ENCODE measurements at regions of chr1 and their contacts with region 1.

Region 1: GRCh38 chr1:186325239-186325638 is 49.8 kb downstream of the TPR start:
- DNase-seq: no peak
- H3K4me3 Mint-ChIP-seq: no peak overlapping the region
- H3K27ac Mint-ChIP-seq: no peak overlapping the region
- H3K4me1 Mint-ChIP-seq: peaks cover 39% of the 10 kb centered on the region
- H3K27me3 Mint-ChIP-seq: no peaks in the 10 kb centered on the region

Region 2: DNA sequence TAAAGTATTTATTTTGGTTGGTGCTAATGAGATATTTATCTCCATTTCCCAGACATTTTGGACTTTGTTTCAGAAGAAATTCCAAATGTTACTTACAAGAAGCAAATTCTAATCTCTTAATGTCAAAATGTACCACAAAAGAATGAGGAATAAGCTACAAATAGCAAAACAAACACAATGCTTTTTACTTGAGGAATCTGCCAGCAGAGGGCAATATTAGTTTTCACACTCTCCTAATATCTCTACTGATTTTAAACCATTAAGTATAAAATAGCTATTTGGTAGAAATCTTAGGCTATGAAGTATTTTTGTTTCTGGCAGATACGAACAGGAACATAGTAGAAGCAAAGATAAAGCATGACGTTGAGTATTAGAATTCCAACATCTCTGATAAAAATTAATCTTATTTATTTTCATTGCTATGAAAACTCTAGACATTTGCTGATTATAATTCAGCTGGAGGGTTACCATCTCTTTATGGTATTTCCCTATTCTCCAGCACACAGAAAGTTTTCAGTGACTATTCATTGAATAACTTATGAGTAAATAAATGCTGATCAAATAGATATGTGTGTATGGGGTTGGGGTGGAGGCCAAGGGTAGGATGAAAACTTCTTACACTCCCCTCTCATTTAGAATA is 604.5 kb before region 1 on chr1:
- CTCF ChIA-PET with region 1: no interaction called
- intact Hi-C with region 1: loop called (anchors 10 kb)
- DNase-seq: no peak
- H3K4me3 Mint-ChIP-seq: no peak overlapping the region
- H3K27ac Mint-ChIP-seq: no peak overlapping the region
- H3K4me1 Mint-ChIP-seq: no peaks in the 10 kb centered on the region
- H3K27me3 Mint-ChIP-seq: peaks cover 8% of the 10 kb centered on the region

Region 3: DNA sequence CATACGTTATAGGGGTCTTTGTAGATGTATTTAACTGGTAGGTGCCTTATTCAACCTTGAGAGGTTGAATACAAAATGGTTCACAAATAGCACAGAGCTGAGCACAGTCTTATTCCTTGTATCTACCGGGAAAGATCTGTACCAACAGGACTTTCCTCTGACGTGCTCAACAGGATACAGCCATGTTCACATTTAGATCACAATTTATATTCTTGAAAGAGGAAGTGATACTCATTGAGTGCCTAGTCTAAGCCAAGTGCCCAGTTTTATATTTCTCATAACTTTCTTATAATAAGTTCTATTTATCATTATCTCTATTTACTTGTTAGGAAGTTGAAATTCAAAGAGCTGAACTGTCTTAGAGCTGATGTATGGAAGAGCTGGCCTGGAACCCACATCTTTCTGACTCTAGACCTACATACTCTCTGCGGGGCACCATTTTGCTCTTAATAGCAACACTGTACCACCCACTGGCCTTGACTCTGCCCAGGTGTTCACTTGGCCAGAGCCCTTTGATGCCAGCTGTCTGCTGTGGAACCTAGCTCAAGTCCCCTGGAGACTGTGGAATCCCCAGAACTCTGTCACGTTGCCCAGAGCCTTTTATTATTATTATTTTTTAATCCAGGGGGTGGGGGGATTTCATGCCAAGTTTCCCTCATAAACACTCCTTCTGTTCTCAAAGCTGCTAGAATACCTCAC is 106.4 kb before region 1 on chr1:
- CTCF ChIA-PET with region 1: no interaction called
- intact Hi-C with region 1: no loop called
- DNase-seq: no peak
- H3K4me3 Mint-ChIP-seq: no peak overlapping the region
- H3K27ac Mint-ChIP-seq: no peak overlapping the region
- H3K4me1 Mint-ChIP-seq: no peaks in the 10 kb centered on the region
- H3K27me3 Mint-ChIP-seq: peaks cover 11% of the 10 kb centered on the region

Region 4: DNA sequence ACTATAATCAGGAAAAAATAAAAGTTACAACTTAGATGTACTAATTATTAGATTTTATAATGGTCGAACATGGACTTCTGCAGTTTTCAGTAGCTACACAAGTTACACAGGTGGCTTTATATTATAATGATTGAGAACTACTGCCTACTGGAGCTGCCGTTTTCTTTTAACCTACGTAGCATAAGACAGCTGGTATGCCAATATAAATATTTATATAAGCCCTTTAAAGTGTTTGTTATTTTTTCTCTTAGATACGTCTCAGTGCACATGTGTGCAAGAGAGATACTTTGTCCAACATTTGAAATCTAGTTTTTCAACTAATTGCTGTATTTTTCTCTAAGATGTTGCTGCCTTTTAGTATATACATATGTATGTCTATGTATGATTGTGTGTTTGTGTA is 93.3 kb after region 1 on chr1:
- CTCF ChIA-PET with region 1: no interaction called
- intact Hi-C with region 1: no loop called
- DNase-seq: no peak
- H3K4me3 Mint-ChIP-seq: no peak overlapping the region
- H3K27ac Mint-ChIP-seq: no peak overlapping the region
- H3K4me1 Mint-ChIP-seq: no peaks in the 10 kb centered on the region
- H3K27me3 Mint-ChIP-seq: no peaks in the 10 kb centered on the region

Region 5: DNA sequence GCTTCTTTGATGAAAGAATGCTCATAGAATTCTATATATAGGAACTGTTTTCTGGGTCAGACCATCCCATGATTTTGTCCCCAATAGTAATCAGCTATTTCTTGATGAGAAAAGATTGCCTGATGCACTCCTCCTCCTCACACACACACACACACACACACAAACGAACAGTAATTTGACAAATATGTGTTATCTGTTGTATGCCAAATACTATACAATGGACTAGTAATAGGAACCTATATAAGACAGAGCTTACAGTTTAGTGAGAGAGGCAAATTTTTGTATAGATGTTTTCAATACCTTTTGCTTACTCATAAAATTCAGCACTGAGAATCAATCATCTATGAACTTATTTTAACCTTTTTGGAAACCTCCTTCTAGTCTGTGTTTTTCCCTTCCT is 580.3 kb after region 1 on chr1:
- CTCF ChIA-PET with region 1: no interaction called
- intact Hi-C with region 1: no loop called
- DNase-seq: no peak
- H3K4me3 Mint-ChIP-seq: no peak overlapping the region
- H3K27ac Mint-ChIP-seq: no peak overlapping the region
- H3K4me1 Mint-ChIP-seq: no peaks in the 10 kb centered on the region
- H3K27me3 Mint-ChIP-seq: peaks cover 3% of the 10 kb centered on the region

Measured in activated naive CD4-positive, alpha-beta T cell treated with anti-CD3 and anti-CD28 coated beads for 36 hours (primary cell).